ENCODE measurements at regions of chr4 and their contacts with region 1.

Region 1: GRCh38 chr4:177309522-177310371 is at the start of gene NEIL3:
- DNase-seq: peak; percentile 91 to 97 (median 95)
- ATAC-seq: peak; percentile 89
- H3K4me3 ChIP-seq: peak within 1 kb of the TSS; percentile 50 to 67
- H3K4me3 Mint-ChIP-seq: peak within 1 kb of the TSS; percentile 82
- H3K27ac ChIP-seq: peak within 1 kb of the TSS; percentile 6 to 24
- H3K27ac Mint-ChIP-seq: peak within 1 kb of the TSS; percentile 77
- H3K4me1 ChIP-seq: peaks cover 9% of the 10 kb centered on the region
- H3K4me1 Mint-ChIP-seq: peaks cover 16% of the 10 kb centered on the region
- H3K27me3 ChIP-seq: no peaks in the 10 kb centered on the region
- H3K27me3 Mint-ChIP-seq: peaks cover 2% of the 10 kb centered on the region
- CTCF ChIP-seq: no peak
- total RNA-seq, gene NEIL3: 0.33 to 0.35 TPM

Region 2: DNA sequence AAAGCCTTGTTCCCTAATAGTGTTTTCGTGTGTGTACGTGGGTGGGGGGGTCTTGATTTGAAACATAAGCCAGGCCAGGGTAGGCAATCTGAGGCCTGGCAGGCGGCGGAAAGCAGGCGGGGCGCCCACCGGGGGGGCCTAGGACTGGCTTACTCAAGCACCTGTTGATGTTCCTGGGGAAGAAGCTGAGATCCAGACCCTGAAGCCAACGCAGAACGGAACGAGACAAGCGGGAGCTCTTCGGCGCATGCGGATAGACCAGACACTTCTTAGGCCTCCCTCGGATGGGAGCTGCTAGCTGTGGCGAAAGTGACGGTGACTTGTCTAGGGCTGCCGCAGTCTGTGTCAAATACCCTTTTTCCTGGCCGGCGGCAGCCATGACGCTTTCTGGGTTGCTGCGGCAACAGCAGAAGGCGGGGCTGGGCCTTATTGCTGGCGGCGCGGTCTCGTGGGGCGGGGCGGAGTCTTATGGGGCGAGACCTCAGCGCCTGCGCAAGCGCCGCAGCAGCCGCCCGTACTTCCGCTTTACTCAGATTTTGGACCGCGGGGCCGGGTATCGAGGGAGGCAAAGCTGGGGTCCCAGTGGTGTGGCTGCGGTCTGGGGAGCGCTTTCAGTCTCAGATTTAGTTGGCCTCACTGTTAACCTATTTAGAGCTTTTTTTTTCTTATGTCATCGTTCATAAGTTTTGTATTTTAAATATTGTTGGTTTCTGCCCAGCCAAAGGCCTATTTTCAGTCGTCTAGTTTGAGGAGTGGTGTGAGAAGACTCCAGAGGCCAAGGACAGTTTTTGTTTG is 1114.4 kb before region 1 on chr4 and contains the start of gene SPATA4:
- CTCF ChIA-PET with region 1: no interaction called
- POLR2A ChIA-PET with region 1: no interaction called
- intact Hi-C with region 1: loop called (anchors 10 kb)
- DNase-seq: peak; percentile 89 to 96 (median 94)
- ATAC-seq: peak; percentile 98
- H3K4me3 ChIP-seq: peak within 1 kb of the TSS; percentile 53 to 65
- H3K4me3 Mint-ChIP-seq: peak within 1 kb of the TSS; percentile 86
- H3K27ac ChIP-seq: peak within 1 kb of the TSS; percentile 34 to 66
- H3K27ac Mint-ChIP-seq: peak within 1 kb of the TSS; percentile 86
- H3K4me1 ChIP-seq: peaks cover 4% of the 10 kb centered on the region
- H3K4me1 Mint-ChIP-seq: peaks cover 9% of the 10 kb centered on the region
- H3K27me3 ChIP-seq: peaks cover 0 to 2% of the 10 kb centered on the region in 2 experiments
- H3K27me3 Mint-ChIP-seq: peaks cover 23% of the 10 kb centered on the region
- CTCF ChIP-seq: no peak
- total RNA-seq, gene SPATA4: not detected

Region 3: GRCh38 chr4:176319704-176320339 is 989.9 kb before region 1 on chr4 and contains the start of gene SPCS3:
- CTCF ChIA-PET with region 1: no interaction called
- POLR2A ChIA-PET with region 1: no interaction called
- intact Hi-C with region 1: loop called in 1 of 2 experiments (anchors 2 kb)
- DNase-seq: peak; percentile 90 to 98 (median 95)
- ATAC-seq: peak; percentile 92
- H3K4me3 ChIP-seq: peak within 1 kb of the TSS; percentile 88 to 93
- H3K4me3 Mint-ChIP-seq: peak within 1 kb of the TSS; percentile 90
- H3K27ac ChIP-seq: peak within 1 kb of the TSS; percentile 91 to 96
- H3K27ac Mint-ChIP-seq: peak within 1 kb of the TSS; percentile 96
- H3K4me1 ChIP-seq: peaks cover 38% of the 10 kb centered on the region
- H3K4me1 Mint-ChIP-seq: peaks cover 54% of the 10 kb centered on the region
- H3K27me3 ChIP-seq: no peaks in the 10 kb centered on the region
- H3K27me3 Mint-ChIP-seq: no peaks in the 10 kb centered on the region
- CTCF ChIP-seq: no peak
- total RNA-seq, gene SPCS3: 162 to 170 TPM

Region 4: GRCh38 chr4:177008071-177008835 is 301.5 kb before region 1 on chr4:
- CTCF ChIA-PET with region 1: no interaction called
- POLR2A ChIA-PET with region 1: no interaction called
- intact Hi-C with region 1: no loop called
- DNase-seq: no peak
- ATAC-seq: no peak
- H3K4me3 ChIP-seq: no peak overlapping the region
- H3K4me3 Mint-ChIP-seq: no peak overlapping the region
- H3K27ac ChIP-seq: no peak overlapping the region
- H3K27ac Mint-ChIP-seq: no peak overlapping the region
- H3K4me1 ChIP-seq: no peaks in the 10 kb centered on the region
- H3K4me1 Mint-ChIP-seq: no peaks in the 10 kb centered on the region
- H3K27me3 ChIP-seq: no peaks in the 10 kb centered on the region
- H3K27me3 Mint-ChIP-seq: no peaks in the 10 kb centered on the region
- CTCF ChIP-seq: no peak

Region 5: DNA sequence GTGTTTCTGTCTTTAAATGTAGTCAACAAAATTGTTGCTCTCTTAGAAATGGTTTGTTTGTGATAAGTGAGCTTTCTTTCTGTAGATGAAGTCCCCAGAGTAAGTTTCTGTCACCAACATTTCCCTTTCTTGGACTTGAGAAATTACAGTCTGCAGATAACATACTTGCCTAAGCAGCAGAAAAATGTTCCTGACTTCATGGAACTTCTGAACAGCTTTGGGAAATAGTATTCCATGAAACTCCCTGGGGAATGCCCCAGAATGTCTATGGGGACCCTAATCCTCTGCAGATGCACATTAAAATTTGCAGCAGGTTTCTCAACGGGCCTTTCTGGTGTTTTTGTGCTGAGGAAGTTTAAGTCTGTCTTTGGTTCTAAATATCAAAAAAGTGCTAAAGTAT is 38.7 kb before region 1 on chr4:
- CTCF ChIA-PET with region 1: no interaction called
- POLR2A ChIA-PET with region 1: no interaction called
- intact Hi-C with region 1: no loop called
- DNase-seq: no peak
- ATAC-seq: no peak
- H3K4me3 ChIP-seq: no peak overlapping the region
- H3K4me3 Mint-ChIP-seq: no peak overlapping the region
- H3K27ac ChIP-seq: no peak overlapping the region
- H3K27ac Mint-ChIP-seq: no peak overlapping the region
- H3K4me1 ChIP-seq: no peaks in the 10 kb centered on the region
- H3K4me1 Mint-ChIP-seq: no peaks in the 10 kb centered on the region
- H3K27me3 ChIP-seq: no peaks in the 10 kb centered on the region
- H3K27me3 Mint-ChIP-seq: no peaks in the 10 kb centered on the region
- CTCF ChIP-seq: no peak

Region 6: GRCh38 chr4:177332119-177332518 is 22.4 kb after region 1 on chr4:
- CTCF ChIA-PET with region 1: no interaction called
- POLR2A ChIA-PET with region 1: interaction called, 4 read pairs
- intact Hi-C with region 1: loop called in 1 of 2 experiments (anchors 2 kb)
- DNase-seq: no peak
- ATAC-seq: no peak
- H3K4me3 ChIP-seq: no peak overlapping the region
- H3K4me3 Mint-ChIP-seq: no peak overlapping the region
- H3K27ac ChIP-seq: no peak overlapping the region
- H3K27ac Mint-ChIP-seq: no peak overlapping the region
- H3K4me1 ChIP-seq: no peaks in the 10 kb centered on the region
- H3K4me1 Mint-ChIP-seq: peaks cover 5% of the 10 kb centered on the region
- H3K27me3 ChIP-seq: no peaks in the 10 kb centered on the region
- H3K27me3 Mint-ChIP-seq: no peaks in the 10 kb centered on the region
- CTCF ChIP-seq: no peak

Region 7: DNA sequence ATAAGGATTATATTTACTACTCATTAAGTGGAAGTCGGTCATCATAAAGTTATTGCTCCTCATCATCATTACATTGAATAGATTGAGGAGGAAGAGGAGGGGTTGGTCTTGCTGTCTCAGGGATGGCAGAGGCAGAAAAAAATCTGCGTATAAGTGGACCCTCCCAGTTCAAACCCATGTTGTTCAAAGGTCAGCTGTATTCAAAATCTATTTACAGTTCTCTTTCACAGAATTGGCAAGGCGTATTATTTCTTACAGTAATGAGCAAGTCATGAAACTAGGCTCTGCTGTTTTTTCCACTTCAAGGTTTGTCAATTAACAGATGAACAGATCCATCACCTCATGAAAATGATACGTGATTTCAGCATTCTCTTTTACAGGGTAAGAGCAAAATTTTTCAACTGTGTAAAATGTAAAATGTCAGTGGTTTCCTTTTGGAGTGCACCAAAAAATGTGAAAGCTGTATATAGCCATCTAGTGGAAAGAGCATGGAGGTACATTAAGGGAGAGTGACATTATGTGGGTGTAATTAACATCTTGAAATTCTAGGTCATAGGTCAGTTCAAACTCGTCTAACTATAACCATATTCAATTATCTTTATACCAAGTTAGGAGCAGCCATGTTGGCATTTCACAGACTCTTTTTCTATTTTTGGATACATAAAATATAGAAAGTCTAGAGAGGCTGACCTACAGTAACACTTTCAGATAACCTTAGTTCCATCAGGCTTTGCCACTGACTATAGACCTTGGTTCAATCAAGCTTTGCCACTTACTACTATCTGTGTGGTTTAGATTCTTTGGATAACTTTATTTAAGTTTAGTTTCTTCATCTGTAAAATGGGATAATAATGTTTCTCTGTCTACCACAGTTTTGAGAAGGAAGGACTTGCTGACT is 30.0 kb after region 1 on chr4:
- CTCF ChIA-PET with region 1: interaction called, 6 read pairs
- POLR2A ChIA-PET with region 1: interaction called, 3 read pairs
- intact Hi-C with region 1: loop called in 1 of 2 experiments (anchors 2 kb)
- DNase-seq: peak in 2 of 9 experiments; percentile 48 to 65
- ATAC-seq: peak; percentile 88
- H3K4me3 ChIP-seq: no peak overlapping the region
- H3K4me3 Mint-ChIP-seq: peak overlapping the region; percentile 42
- H3K27ac ChIP-seq: no peak overlapping the region
- H3K27ac Mint-ChIP-seq: no peak overlapping the region
- H3K4me1 ChIP-seq: no peaks in the 10 kb centered on the region
- H3K4me1 Mint-ChIP-seq: peaks cover 5% of the 10 kb centered on the region
- H3K27me3 ChIP-seq: no peaks in the 10 kb centered on the region
- H3K27me3 Mint-ChIP-seq: no peaks in the 10 kb centered on the region
- CTCF ChIP-seq: peak; percentile 60

Region 8: GRCh38 chr4:177436456-177436855 is 126.7 kb after region 1 on chr4:
- CTCF ChIA-PET with region 1: interaction called, 4 read pairs
- POLR2A ChIA-PET with region 1: interaction called, 13 read pairs
- intact Hi-C with region 1: loop called in 1 of 2 experiments (anchors 2 kb)
- DNase-seq: no peak
- ATAC-seq: no peak
- H3K4me3 ChIP-seq: no peak overlapping the region
- H3K4me3 Mint-ChIP-seq: no peak overlapping the region
- H3K27ac ChIP-seq: no peak overlapping the region
- H3K27ac Mint-ChIP-seq: no peak overlapping the region
- H3K4me1 ChIP-seq: peaks cover 9% of the 10 kb centered on the region
- H3K4me1 Mint-ChIP-seq: peaks cover 20% of the 10 kb centered on the region
- H3K27me3 ChIP-seq: no peaks in the 10 kb centered on the region
- H3K27me3 Mint-ChIP-seq: no peaks in the 10 kb centered on the region
- CTCF ChIP-seq: no peak

Region 9: DNA sequence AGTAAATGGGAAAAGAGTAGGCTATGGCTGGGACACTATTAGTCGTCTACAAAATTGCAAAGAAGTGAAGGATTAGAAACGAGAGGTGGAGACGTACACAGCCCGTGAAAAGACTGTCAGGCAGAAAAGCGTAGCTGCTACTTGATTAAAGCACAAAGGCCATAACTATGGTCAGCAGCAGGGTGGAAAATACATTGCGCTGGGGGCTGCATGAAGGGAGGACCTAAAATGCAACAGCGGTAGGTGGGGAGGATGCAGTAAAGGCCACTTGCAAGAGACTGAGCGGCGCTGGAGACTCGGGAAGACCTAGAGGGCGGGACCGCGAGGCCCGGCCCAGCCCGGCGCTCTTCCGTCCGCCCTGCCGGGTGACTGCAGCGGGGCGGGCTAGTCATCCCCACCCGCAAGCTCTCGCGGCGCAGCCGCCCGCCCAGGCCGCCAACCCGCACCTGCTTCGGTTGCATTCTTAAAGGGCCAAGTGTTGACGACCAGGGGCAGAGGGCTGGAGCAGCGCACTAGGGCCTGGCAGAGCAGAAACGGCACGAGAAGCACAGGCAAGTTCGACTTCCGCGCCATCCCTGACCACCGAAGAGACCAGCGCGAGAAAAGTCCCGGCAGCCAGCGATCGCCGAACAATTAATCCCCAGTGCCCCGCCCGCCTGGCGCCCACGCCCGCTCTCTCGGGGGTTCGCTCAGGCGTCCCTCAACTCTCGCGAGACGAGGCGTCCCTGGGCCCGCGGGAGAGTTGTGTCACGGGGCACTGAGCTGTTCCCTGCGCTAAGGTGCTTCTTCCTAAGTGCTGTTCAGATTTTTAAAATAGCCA is 132.3 kb after region 1 on chr4 and contains the start of gene AGA:
- CTCF ChIA-PET with region 1: interaction called, 4 read pairs
- POLR2A ChIA-PET with region 1: interaction called, 13 read pairs
- intact Hi-C with region 1: loop called (anchors 1 to 2 kb)
- DNase-seq: peak; percentile 92 to 98 (median 96)
- ATAC-seq: peak; percentile 90
- H3K4me3 ChIP-seq: peak within 1 kb of the TSS; percentile 52 to 75
- H3K4me3 Mint-ChIP-seq: peak within 1 kb of the TSS; percentile 92
- H3K27ac ChIP-seq: peak within 1 kb of the TSS; percentile 85
- H3K27ac Mint-ChIP-seq: peak within 1 kb of the TSS; percentile 96
- H3K4me1 ChIP-seq: peaks cover 14% of the 10 kb centered on the region
- H3K4me1 Mint-ChIP-seq: peaks cover 35% of the 10 kb centered on the region
- H3K27me3 ChIP-seq: no peaks in the 10 kb centered on the region
- H3K27me3 Mint-ChIP-seq: no peaks in the 10 kb centered on the region
- CTCF ChIP-seq: no peak
- total RNA-seq, gene AGA: 12.1 to 15.0 TPM

Measured in CD8-positive, alpha-beta T cell (primary cell).